ENCODE measurements at regions of chr18 and their contacts with region 1.

Region 1: DNA sequence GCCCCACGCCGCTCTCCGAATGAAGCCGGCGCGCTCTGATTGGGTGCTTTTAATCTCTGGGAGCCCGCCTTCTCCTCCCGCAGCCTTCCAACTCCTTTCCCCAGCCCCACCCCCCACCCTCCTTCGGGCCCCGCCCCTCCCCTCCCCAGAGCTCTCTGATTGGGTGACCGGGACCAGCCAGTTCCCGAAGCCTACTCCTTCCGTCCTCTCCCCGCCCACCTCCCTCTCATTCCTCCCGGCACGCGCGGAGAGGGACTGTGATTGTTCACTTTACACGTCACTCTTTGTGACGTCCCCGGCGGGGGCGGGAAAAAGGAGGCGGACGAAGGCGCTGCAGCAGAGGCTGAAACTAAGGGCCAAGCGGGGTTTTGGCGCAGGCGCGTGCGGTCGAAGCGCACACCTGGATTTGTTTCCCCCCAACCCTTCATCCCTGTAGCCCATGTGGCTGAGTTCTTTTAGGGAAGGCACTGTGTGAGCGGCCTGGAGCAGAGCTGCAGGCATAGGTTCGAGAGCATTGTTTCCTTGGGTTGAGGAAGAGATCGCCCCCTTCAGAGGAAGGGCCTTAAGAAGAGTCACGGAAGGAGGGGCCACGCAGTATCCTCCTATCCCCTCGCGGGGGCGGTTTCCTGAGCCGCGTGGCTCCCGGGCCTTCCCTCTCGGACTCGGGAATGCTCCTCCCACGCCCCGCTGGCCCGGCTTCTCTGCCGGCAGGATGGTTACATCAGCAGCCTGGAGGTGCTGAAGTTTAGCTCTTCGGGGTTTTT is at the start of gene MEX3C:
- DNase-seq: peak; percentile 98 to 99
- H3K4me3 ChIP-seq: peak within 1 kb of the TSS; percentile 68
- H3K4me1 ChIP-seq: peaks cover 18% of the 10 kb centered on the region
- H3K27me3 ChIP-seq: no peaks in the 10 kb centered on the region

Region 2: DNA sequence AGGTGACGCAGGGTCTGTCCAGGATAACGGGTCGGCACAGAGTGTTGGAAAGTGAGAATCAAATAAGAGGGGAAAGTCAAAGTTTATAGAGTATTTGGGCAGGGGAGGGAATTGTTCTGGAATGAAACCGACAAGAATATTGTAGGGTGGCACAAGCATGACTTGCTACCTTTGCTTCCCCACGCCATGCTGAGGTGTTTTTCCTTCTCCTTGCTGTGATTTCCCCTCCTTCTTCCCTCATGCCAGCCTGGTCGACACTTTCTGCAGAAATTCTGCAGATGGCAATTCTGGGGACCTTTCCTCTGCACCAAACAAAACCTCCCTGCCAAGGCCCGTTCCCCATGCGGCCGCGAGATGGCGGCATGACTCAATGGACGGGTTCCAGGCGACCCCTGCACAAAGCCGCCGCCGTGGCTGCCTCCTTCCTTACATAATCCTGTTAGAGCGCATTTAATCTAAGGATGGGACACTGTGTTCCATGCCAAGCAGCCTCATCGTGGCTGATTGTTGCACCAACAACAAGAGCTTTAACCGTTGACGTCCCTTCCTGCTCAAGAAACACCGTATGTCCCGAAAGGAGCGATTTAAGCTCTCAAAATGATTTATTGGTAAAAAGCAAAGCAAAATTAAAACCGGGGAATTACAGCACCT is 378.0 kb before region 1 on chr18 and contains the start of gene MRO:
- in situ Hi-C with region 1: loop called (anchors 25 kb)
- DNase-seq: peak; percentile 86 to 91
- H3K4me3 ChIP-seq: peak within 1 kb of the TSS; percentile 5
- H3K4me1 ChIP-seq: peaks cover 23% of the 10 kb centered on the region
- H3K27me3 ChIP-seq: no peaks in the 10 kb centered on the region

Region 3: GRCh38 chr18:50944245-50944932 is 253.5 kb before region 1 on chr18:
- in situ Hi-C with region 1: no loop called
- DNase-seq: no peak
- H3K4me3 ChIP-seq: no peak overlapping the region
- H3K4me1 ChIP-seq: no peaks in the 10 kb centered on the region
- H3K27me3 ChIP-seq: no peaks in the 10 kb centered on the region

Region 4: GRCh38 chr18:51082571-51083267 is 115.1 kb before region 1 on chr18:
- in situ Hi-C with region 1: loop called (anchors 25 kb)
- DNase-seq: no peak
- H3K4me3 ChIP-seq: no peak overlapping the region
- H3K4me1 ChIP-seq: no peaks in the 10 kb centered on the region
- H3K27me3 ChIP-seq: no peaks in the 10 kb centered on the region